ENCODE measurements at regions of chr10 and their contacts with region 1.

Region 1: DNA sequence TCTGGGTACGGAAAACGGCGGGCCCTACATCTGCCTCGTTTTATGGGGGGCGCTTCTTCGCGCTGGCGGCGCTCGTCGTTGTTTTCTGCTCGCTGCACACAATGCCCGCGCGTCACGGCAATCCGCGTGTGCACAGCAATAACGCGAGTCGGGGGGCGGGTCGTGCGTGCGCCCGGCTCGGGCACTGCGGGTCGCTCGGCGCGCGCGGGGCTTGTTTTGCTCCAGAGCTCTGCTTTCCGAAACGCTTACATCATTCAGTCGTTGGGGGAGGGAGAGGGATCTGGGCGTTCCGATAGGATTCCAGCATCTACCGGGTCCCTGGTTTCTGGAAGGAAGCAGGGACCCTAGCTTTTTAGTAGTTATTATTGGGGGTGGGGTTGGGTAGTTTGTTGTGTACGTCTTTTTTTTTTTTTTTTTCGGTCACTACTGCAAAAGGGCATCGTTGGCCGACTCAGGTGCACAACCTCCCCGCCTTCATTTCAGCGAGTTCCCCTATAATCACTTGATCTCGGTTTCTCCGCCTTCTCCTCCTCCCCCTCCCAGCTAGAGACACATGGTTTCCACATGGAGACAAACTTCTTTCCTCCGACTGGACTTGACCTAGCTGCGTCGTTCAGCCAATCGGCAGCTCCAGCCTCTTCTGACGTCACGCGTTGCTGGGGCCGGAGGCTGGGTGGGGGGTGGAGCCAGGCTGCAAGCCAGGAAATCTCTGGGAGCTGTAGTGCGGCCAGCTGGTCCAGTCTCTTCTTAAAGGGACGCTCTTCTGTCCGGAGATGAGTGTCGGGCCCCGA is 3.5 kb downstream of the MXI1 start:
- DNase-seq: peak; percentile 84 to 96 (median 87)
- ATAC-seq: peak; percentile 41
- H3K4me3 ChIP-seq: peak overlapping the region; percentile 94
- H3K4me3 Mint-ChIP-seq: peak overlapping the region; percentile 99
- H3K27ac ChIP-seq: peak overlapping the region; percentile 85 to 98
- H3K27ac Mint-ChIP-seq: peak overlapping the region; percentile 100
- H3K4me1 ChIP-seq: peaks cover 76% of the 10 kb centered on the region
- H3K4me1 Mint-ChIP-seq: peaks cover 58% of the 10 kb centered on the region
- H3K27me3 ChIP-seq: no peaks in the 10 kb centered on the region
- H3K27me3 Mint-ChIP-seq: peaks cover 5% of the 10 kb centered on the region
- CTCF ChIP-seq: no peak

Region 2: DNA sequence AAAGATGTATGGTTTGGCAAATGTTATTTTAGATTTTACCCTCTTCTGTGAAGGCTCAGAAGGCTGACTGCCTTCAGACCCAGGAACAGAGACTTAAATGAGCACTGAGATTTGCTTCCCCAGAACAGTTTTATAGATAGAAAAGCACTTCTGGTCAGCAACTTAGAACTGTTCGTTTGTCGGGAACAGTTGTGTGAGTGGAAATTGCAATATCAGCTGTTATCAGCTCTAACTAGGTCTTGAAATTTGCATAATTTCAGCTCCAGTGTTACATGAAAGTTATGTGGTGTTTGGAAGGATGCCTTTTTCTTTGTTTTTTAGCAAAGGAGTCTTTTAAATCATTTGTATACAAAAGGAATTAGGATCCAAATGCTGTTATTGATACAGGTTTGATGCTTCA is 87.3 kb before region 1 on chr10:
- CTCF ChIA-PET with region 1: no interaction called
- POLR2A ChIA-PET with region 1: no interaction called
- intact Hi-C with region 1: no loop called
- DNase-seq: no peak
- ATAC-seq: no peak
- H3K4me3 ChIP-seq: no peak overlapping the region
- H3K4me3 Mint-ChIP-seq: no peak overlapping the region
- H3K27ac ChIP-seq: no peak overlapping the region
- H3K27ac Mint-ChIP-seq: peak overlapping the region; percentile 58
- H3K4me1 ChIP-seq: no peaks in the 10 kb centered on the region
- H3K4me1 Mint-ChIP-seq: peaks cover 4% of the 10 kb centered on the region
- H3K27me3 ChIP-seq: no peaks in the 10 kb centered on the region
- H3K27me3 Mint-ChIP-seq: no peaks in the 10 kb centered on the region
- CTCF ChIP-seq: no peak

Region 3: DNA sequence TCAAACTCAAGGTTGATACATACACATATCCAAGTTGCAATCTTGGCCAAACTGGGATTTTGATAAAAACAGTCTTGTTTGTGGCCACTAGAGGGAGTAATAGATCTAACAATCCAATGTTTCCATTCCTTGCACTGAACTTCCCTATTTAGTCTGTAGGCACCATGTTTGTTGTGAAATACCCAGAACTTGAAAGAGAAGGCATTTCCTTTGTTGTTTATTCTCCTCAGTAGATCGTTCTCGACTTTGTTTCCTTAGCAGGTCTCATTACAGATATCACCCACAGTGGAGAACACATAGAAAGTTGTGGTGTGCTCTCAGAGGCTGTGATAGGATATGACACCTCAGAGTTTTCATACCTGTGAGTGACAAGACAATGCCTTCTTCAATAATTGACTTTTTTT is 73.7 kb before region 1 on chr10:
- CTCF ChIA-PET with region 1: interaction called, 19 read pairs
- POLR2A ChIA-PET with region 1: interaction called, 45 read pairs
- intact Hi-C with region 1: loop called (anchors 1 to 5 kb)
- DNase-seq: peak in 3 of 14 experiments; percentile 74 to 79 (median 77)
- ATAC-seq: peak; percentile 74
- H3K4me3 ChIP-seq: no peak overlapping the region
- H3K4me3 Mint-ChIP-seq: no peak overlapping the region
- H3K27ac ChIP-seq: no peak overlapping the region
- H3K27ac Mint-ChIP-seq: peak overlapping the region; percentile 35
- H3K4me1 ChIP-seq: peaks cover 5% of the 10 kb centered on the region
- H3K4me1 Mint-ChIP-seq: peaks cover 31% of the 10 kb centered on the region
- H3K27me3 ChIP-seq: no peaks in the 10 kb centered on the region
- H3K27me3 Mint-ChIP-seq: no peaks in the 10 kb centered on the region
- CTCF ChIP-seq: peak; percentile 93

Region 4: GRCh38 chr10:110273474-110273873 is 62.6 kb after region 1 on chr10:
- CTCF ChIA-PET with region 1: interaction called, 39 read pairs
- POLR2A ChIA-PET with region 1: interaction called, 28 read pairs
- intact Hi-C with region 1: loop called in 1 of 2 experiments (anchors 5 kb)
- DNase-seq: peak in 10 of 14 experiments; percentile 8 to 71 (median 40)
- ATAC-seq: peak; percentile 75
- H3K4me3 ChIP-seq: no peak overlapping the region
- H3K4me3 Mint-ChIP-seq: peak overlapping the region; percentile 62
- H3K27ac ChIP-seq: no peak overlapping the region
- H3K27ac Mint-ChIP-seq: peak overlapping the region; percentile 60
- H3K4me1 ChIP-seq: peaks cover 14% of the 10 kb centered on the region
- H3K4me1 Mint-ChIP-seq: peaks cover 66% of the 10 kb centered on the region
- H3K27me3 ChIP-seq: no peaks in the 10 kb centered on the region
- H3K27me3 Mint-ChIP-seq: no peaks in the 10 kb centered on the region
- CTCF ChIP-seq: no peak

Region 5: DNA sequence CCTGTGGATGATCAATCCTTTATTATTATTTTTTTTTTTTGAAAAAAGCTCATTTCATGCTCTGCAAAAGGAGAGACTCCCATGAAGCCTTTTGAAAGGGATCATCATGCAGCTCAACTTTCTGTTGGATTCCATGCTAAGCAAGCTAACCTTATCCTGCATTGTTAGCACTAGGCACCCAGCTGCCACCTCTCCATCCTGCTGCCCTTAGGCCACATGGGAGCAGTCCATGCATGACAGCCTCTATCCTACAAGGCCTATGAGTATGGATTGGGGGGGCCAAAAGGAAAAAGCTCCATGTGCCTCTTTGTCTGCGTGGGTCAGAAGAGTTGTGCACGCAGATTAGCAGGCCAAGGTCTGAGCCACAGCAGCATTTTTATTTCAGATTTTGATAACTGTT is 74.6 kb after region 1 on chr10:
- CTCF ChIA-PET with region 1: interaction called, 39 read pairs
- POLR2A ChIA-PET with region 1: interaction called, 28 read pairs
- intact Hi-C with region 1: no loop called
- DNase-seq: no peak
- ATAC-seq: no peak
- H3K4me3 ChIP-seq: no peak overlapping the region
- H3K4me3 Mint-ChIP-seq: no peak overlapping the region
- H3K27ac ChIP-seq: no peak overlapping the region
- H3K27ac Mint-ChIP-seq: no peak overlapping the region
- H3K4me1 ChIP-seq: no peaks in the 10 kb centered on the region
- H3K4me1 Mint-ChIP-seq: peaks cover 11% of the 10 kb centered on the region
- H3K27me3 ChIP-seq: no peaks in the 10 kb centered on the region
- H3K27me3 Mint-ChIP-seq: no peaks in the 10 kb centered on the region
- CTCF ChIP-seq: no peak